ENCODE measurements at regions of chr17 and their contacts with region 1.

Region 1: GRCh38 chr17:3594051-3594800 is 15.0 kb downstream of the TRPV1 start:
- DNase-seq: peak in 3 of 5 donors; percentile 3 to 62 (median 42)
- ATAC-seq: peak in 3 of 4 donors; percentile 31 to 78 (median 69)
- H3K4me3 ChIP-seq: no peak overlapping the region
- H3K27ac ChIP-seq: peak overlapping the region in 9 of 12 donors; percentile 1 to 61 (median 32)
- H3K4me1 ChIP-seq: peaks cover 0 to 20% (median 6%) of the 10 kb centered on the region in 12 donors
- H3K27me3 ChIP-seq: no peaks in the 10 kb centered on the region
- CTCF ChIP-seq: no peak
- POLR2A ChIP-seq: no peak

Region 2: GRCh38 chr17:3543453-3543852 is 50.8 kb before region 1 on chr17:
- intact Hi-C with region 1: loop called in 1 of 10 experiments (anchors 5 kb)
- DNase-seq: no peak
- ATAC-seq: no peak
- H3K4me3 ChIP-seq: no peak overlapping the region
- H3K27ac ChIP-seq: no peak overlapping the region
- H3K4me1 ChIP-seq: no peaks in the 10 kb centered on the region
- H3K27me3 ChIP-seq: peaks cover 0 to 4% (median 0%) of the 10 kb centered on the region in 9 donors
- CTCF ChIP-seq: no peak
- POLR2A ChIP-seq: no peak

Region 3: GRCh38 chr17:3626831-3627768 is 32.9 kb after region 1 on chr17:
- intact Hi-C with region 1: no loop called
- DNase-seq: no peak
- ATAC-seq: peak in 2 of 4 donors; percentile 21 to 24
- H3K4me3 ChIP-seq: no peak overlapping the region
- H3K27ac ChIP-seq: peak overlapping the region in 9 of 12 donors; percentile 2 to 69 (median 40)
- H3K4me1 ChIP-seq: peaks cover 0 to 16% (median 5%) of the 10 kb centered on the region in 12 donors
- H3K27me3 ChIP-seq: no peaks in the 10 kb centered on the region
- CTCF ChIP-seq: no peak
- POLR2A ChIP-seq: no peak